ENCODE measurements at regions of chr16 and their contacts with region 1.

Region 1: GRCh38 chr16:52308051-52308450 is 238.9 kb downstream of the TOX3 start:
- DNase-seq: no peak
- ATAC-seq: no peak
- H3K4me3 ChIP-seq: no peak overlapping the region
- H3K4me3 Mint-ChIP-seq: no peak overlapping the region
- H3K27ac ChIP-seq: no peak overlapping the region
- H3K27ac Mint-ChIP-seq: no peak overlapping the region
- H3K4me1 ChIP-seq: no peaks in the 10 kb centered on the region
- H3K4me1 Mint-ChIP-seq: no peaks in the 10 kb centered on the region
- H3K27me3 ChIP-seq: no peaks in the 10 kb centered on the region
- H3K27me3 Mint-ChIP-seq: no peaks in the 10 kb centered on the region

Region 2: DNA sequence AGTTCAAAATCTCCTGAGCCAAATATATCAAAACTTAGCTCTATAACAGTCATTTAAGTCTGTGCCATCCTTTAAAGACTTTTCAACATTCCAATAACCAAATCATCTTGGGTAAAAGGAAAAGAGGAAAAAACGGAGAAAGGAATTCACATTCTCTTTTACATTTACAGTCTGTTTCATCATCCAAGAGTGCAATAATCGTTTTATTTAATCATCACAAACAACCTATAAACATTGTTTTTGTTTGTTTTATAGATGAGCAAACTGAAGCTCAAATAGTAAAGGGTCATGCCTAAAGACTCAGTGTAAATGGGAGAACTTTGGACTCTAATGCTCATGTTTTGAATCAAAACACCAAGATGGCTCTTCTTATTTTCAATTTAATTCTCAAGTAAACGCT is 13.4 kb before region 1 on chr16:
- CTCF ChIA-PET with region 1: no interaction called
- POLR2A ChIA-PET with region 1: interaction called in 1 of 2 experiments, 10 read pairs
- DNase-seq: no peak
- ATAC-seq: no peak
- H3K4me3 ChIP-seq: no peak overlapping the region
- H3K4me3 Mint-ChIP-seq: no peak overlapping the region
- H3K27ac ChIP-seq: no peak overlapping the region
- H3K27ac Mint-ChIP-seq: no peak overlapping the region
- H3K4me1 ChIP-seq: no peaks in the 10 kb centered on the region
- H3K4me1 Mint-ChIP-seq: no peaks in the 10 kb centered on the region
- H3K27me3 ChIP-seq: no peaks in the 10 kb centered on the region
- H3K27me3 Mint-ChIP-seq: no peaks in the 10 kb centered on the region